AG04449 (cell line): ENCODE measurements at regions of chr15 and their contacts with region 1.

Region 1: GRCh38 chr15:81265944-81266775 is 57.8 kb downstream of the STARD5 start:
- DNase-seq: no peak
- H3K4me3 ChIP-seq: peak overlapping the region; percentile 23
- CTCF ChIP-seq: peak; percentile 89

Region 2: GRCh38 chr15:80776420-80777045 is 489.6 kb before region 1 on chr15:
- CTCF ChIA-PET with region 1: interaction called, 11 read pairs
- POLR2A ChIA-PET with region 1: no interaction called
- DNase-seq: peak; percentile 64
- H3K4me3 ChIP-seq: no peak overlapping the region
- CTCF ChIP-seq: peak; percentile 79

Region 3: GRCh38 chr15:81024265-81024872 is 241.8 kb before region 1 on chr15:
- CTCF ChIA-PET with region 1: interaction called, 12 read pairs
- POLR2A ChIA-PET with region 1: no interaction called
- DNase-seq: no peak
- H3K4me3 ChIP-seq: no peak overlapping the region
- CTCF ChIP-seq: no peak

Region 4: GRCh38 chr15:81126892-81127291 is 139.3 kb before region 1 on chr15:
- CTCF ChIA-PET with region 1: interaction called, 30 read pairs
- POLR2A ChIA-PET with region 1: no interaction called
- DNase-seq: no peak
- H3K4me3 ChIP-seq: no peak overlapping the region
- CTCF ChIP-seq: no peak

Region 5: GRCh38 chr15:81195339-81195864 is 70.8 kb before region 1 on chr15:
- CTCF ChIA-PET with region 1: interaction called, 26 read pairs
- POLR2A ChIA-PET with region 1: no interaction called
- DNase-seq: no peak
- H3K4me3 ChIP-seq: no peak overlapping the region
- CTCF ChIP-seq: no peak

Region 6: DNA sequence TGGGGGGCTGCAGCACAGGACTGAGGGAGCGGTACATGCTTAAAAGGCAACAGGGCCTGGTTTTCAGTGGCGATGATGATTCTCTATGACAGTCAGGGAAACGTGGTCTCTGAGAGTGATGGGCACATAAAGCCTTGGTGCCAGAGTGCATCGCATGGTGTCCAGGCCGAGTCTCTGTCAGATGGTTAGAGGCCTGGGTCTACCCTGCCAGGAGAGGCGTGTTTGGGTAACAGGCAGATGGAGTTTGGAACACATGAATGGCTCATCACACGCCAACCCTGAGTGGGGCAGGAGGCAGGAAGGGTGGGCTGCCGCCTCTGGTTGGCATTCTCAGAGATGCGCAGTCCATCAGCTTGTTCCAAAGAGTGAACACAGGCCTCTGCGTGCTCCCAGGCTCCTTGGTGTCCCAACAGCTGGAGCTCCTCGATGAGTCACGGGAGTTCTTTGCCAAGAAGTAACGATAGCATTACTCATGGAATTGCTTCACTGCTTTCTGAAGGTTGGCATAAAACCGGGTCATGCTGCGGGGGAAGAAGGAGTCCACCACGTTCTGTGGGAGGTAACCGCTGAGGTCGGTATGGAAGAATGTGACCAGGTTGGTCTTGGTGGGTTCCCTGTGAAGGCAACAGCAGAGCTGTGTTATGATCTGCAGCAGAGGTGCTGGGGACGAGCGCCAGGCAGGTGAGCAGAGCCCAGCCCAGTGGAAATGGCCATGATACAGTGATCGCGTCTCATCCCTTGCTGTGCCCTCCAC is 46.8 kb after region 1 on chr15:
- CTCF ChIA-PET with region 1: interaction called, 28 read pairs
- POLR2A ChIA-PET with region 1: no interaction called
- DNase-seq: peak; percentile 90
- H3K4me3 ChIP-seq: no peak overlapping the region
- CTCF ChIP-seq: no peak

Region 7: DNA sequence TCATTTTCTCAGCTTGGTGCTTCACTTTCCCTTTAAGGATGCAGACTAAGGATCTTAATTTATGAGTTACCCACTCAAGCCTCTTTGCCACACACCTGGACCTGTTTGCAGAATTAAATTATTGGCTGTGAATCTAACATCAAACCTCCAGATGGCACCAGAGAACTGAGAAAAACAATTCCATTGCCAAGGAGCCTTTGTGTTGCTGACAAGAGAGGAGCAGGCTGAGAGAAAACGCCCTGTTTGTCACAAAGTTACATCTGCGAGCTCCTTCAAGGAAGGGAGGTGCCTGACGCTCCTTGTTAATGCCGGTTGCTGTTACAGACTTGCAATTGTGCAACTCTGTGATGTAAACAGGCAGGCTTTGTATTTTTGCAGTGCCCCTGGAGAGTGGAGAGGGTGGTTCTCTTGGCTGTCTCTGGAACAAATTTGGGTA is 144.2 kb after region 1 on chr15:
- CTCF ChIA-PET with region 1: interaction called, 70 read pairs
- POLR2A ChIA-PET with region 1: no interaction called
- DNase-seq: peak; percentile 12
- H3K4me3 ChIP-seq: no peak overlapping the region
- CTCF ChIP-seq: peak; percentile 46